IMR-90 (cell line): ENCODE measurements at regions of chr7 and their contacts with region 1.

Region 1: DNA sequence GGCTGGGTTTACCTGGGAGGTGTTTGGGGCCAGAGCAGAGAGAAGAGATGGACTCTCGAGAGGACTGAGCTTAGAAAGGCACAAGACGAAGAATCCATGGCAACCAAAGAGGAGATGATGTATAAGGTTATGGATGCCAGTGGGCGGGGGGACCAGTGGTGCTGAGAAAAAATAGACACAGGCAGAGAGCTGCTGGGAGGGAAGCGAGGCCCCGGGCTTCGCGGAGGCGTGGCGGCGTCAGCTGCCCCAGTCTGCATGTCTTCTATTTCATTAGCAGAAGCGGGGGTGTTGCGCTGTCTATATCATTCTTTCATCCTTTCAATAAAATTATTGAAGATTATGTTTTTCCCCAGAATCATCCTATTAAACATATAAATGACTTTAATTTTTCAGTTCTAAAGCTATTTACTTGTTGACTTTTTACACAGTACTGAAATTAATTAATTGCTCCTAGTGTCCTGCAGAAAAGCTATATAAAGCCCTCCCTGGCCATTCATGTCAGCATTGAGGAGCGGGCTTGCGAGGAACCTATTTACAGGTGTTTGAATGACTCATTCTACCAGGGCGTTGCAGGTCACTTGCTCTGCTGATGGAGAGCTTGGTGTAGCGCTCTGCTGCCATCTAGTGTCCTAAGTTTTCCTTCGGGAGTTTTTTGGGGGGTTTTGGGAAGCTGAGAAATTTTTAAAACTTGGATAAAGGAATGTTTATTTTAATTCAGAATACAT is 42.9 kb upstream of the BHLHA15 start:
- DNase-seq: peak; percentile 66
- ATAC-seq: peak; percentile 69
- H3K4me3 ChIP-seq: no peak overlapping the region
- H3K27ac ChIP-seq: no peak overlapping the region
- H3K4me1 ChIP-seq: no peaks in the 10 kb centered on the region
- H3K27me3 ChIP-seq: no peaks in the 10 kb centered on the region
- CTCF ChIP-seq: peak; percentile 87
- POLR2A ChIP-seq: peak; percentile 43; the same call in 1 of the 2 replicates
- RAD21 ChIP-seq: peak; percentile 86

Region 2: DNA sequence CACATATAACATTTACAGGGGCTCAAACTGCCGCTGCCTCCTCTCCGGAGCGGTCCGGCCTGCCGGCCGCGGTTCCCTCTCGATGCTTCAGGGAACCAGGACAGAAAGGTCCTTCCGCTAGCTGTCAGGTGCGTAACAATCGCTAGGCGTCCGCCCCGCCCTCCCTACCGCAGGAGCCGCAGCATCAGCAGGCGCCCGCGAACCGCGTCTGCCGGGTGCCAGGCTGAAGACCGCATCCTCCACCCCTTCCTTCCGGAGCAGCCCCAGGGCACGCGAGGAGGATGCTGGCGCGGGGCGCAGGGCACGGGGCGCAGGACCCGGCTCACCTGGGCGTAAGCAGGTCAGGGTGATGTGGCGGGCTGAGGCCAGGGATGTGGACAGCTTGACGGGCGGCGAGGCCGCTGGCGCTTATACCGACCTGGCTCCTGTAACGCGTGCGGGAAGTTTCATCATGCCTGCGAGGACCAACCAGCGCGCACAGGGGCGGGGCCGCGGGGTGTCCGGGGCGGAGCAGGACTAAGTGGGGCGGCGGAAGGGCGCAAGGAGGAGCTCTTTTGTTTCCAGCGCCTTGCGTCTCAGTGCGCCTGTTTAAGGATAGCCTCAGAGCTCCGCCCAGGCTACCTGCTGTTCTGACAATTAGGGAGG is 296.2 kb before region 1 on chr7 and contains the start of gene ASNS:
- CTCF ChIA-PET with region 1: no interaction called
- POLR2A ChIA-PET with region 1: no interaction called
- dilution Hi-C with region 1: no loop called
- in situ Hi-C with region 1: loop called (anchors 25 kb)
- intact Hi-C with region 1: loop called (anchors 1 kb)
- DNase-seq: peak; percentile 90
- ATAC-seq: peak; percentile 100
- H3K4me3 ChIP-seq: peak within 1 kb of the TSS; percentile 78
- H3K27ac ChIP-seq: peak within 1 kb of the TSS; percentile 81
- H3K4me1 ChIP-seq: no peaks in the 10 kb centered on the region
- H3K27me3 ChIP-seq: no peaks in the 10 kb centered on the region
- CTCF ChIP-seq: no peak; the same call in 1 of the 2 replicates
- POLR2A ChIP-seq: peak; percentile 87
- RAD21 ChIP-seq: no peak
- total RNA-seq, gene ASNS: 39.2 and 39.4 TPM in 2 replicates

Region 3: DNA sequence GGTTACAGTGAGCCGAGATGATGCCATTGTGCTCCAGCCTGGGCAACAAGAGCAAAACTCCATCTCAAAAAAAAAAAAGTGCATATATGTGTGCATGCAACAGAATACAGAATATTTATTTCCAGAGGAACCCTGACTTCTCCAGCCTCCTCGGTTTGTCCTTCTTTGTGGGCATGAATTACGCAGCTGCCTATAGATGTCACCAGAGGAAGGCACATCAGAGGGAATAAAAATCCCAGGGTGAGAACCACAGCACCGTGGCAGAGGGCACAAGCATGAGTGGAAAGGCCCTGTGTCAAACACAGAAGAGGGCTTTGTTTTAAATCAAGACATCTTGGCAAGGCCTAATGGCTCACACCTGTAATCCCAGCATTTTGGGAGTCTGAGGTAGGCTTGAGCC is 154.0 kb before region 1 on chr7:
- CTCF ChIA-PET with region 1: interaction called, 16 read pairs
- POLR2A ChIA-PET with region 1: no interaction called
- dilution Hi-C with region 1: no loop called
- in situ Hi-C with region 1: no loop called
- intact Hi-C with region 1: no loop called
- DNase-seq: no peak
- ATAC-seq: no peak
- H3K4me3 ChIP-seq: no peak overlapping the region
- H3K27ac ChIP-seq: no peak overlapping the region
- H3K4me1 ChIP-seq: no peaks in the 10 kb centered on the region
- H3K27me3 ChIP-seq: peaks cover 2% of the 10 kb centered on the region; the same call in 1 of the 2 replicates
- CTCF ChIP-seq: no peak
- POLR2A ChIP-seq: no peak
- RAD21 ChIP-seq: no peak

Region 4: GRCh38 chr7:98021588-98022351 is 146.6 kb before region 1 on chr7:
- CTCF ChIA-PET with region 1: interaction called, 81 read pairs
- POLR2A ChIA-PET with region 1: interaction called, 4 read pairs
- dilution Hi-C with region 1: no loop called
- in situ Hi-C with region 1: loop called (anchors 5 kb)
- intact Hi-C with region 1: loop called (anchors 1 kb)
- DNase-seq: peak; percentile 37
- ATAC-seq: peak; percentile 94
- H3K4me3 ChIP-seq: no peak overlapping the region
- H3K27ac ChIP-seq: no peak overlapping the region
- H3K4me1 ChIP-seq: no peaks in the 10 kb centered on the region
- H3K27me3 ChIP-seq: peaks cover 2% of the 10 kb centered on the region; the same call in 1 of the 2 replicates
- CTCF ChIP-seq: peak; percentile 90
- POLR2A ChIP-seq: no peak
- RAD21 ChIP-seq: peak; percentile 91

Region 5: GRCh38 chr7:98106647-98107445 is 61.5 kb before region 1 on chr7 and contains the start of gene LMTK2:
- CTCF ChIA-PET with region 1: interaction called, 6 read pairs
- POLR2A ChIA-PET with region 1: no interaction called
- dilution Hi-C with region 1: no loop called
- in situ Hi-C with region 1: no loop called
- intact Hi-C with region 1: loop called (anchors 1 kb)
- DNase-seq: peak; percentile 86
- ATAC-seq: peak; percentile 100
- H3K4me3 ChIP-seq: peak within 1 kb of the TSS; percentile 87
- H3K27ac ChIP-seq: peak within 1 kb of the TSS; percentile 55
- H3K4me1 ChIP-seq: no peaks in the 10 kb centered on the region
- H3K27me3 ChIP-seq: no peaks in the 10 kb centered on the region
- CTCF ChIP-seq: peak; percentile 98
- POLR2A ChIP-seq: peak; percentile 73
- RAD21 ChIP-seq: peak; percentile 72
- total RNA-seq, gene LMTK2: 5.0 and 5.3 TPM in 2 replicates

Region 6: GRCh38 chr7:98119256-98119918 is 49.0 kb before region 1 on chr7:
- CTCF ChIA-PET with region 1: interaction called, 9 read pairs
- POLR2A ChIA-PET with region 1: no interaction called
- dilution Hi-C with region 1: no loop called
- in situ Hi-C with region 1: no loop called
- intact Hi-C with region 1: loop called (anchors 5 kb)
- DNase-seq: peak; percentile 79
- ATAC-seq: peak; percentile 73
- H3K4me3 ChIP-seq: no peak overlapping the region
- H3K27ac ChIP-seq: no peak overlapping the region
- H3K4me1 ChIP-seq: peaks cover 7% of the 10 kb centered on the region
- H3K27me3 ChIP-seq: no peaks in the 10 kb centered on the region
- CTCF ChIP-seq: no peak
- POLR2A ChIP-seq: no peak
- RAD21 ChIP-seq: no peak